ENCODE measurements at regions of chr13 and their contacts with region 1.

Region 1: DNA sequence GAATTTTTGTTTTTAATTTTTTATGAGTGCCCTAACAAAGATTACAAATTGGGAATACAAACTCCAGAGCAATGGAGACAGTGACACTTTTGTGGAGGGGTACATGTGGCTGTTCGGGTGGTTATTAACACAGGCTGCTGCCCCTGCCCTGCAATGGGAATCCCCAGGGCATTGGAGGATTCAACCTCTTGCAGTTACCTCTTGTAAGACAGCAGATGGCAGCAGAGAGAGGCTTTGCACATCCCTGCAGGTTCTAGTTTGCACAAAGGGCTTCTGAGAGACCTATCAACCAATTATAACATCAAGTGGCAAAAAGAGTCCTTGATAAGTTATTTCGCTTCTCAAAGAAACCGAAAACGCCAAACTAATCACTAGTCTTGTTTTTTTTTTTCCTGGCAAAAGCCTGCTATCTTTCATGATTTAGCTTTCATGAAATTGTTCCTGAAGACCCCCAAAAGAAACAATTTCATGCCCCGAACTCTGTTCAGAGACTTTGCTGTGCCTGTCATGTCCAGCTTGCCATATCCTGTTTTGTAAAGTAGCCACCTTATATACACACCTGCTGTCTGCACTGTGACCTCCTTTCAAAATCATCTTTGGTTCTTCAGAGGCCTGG is 10.4 kb downstream of the GJB2 start:
- DNase-seq: peak; percentile 78
- H3K4me3 Mint-ChIP-seq: no peak overlapping the region
- H3K27ac Mint-ChIP-seq: no peak overlapping the region
- H3K4me1 Mint-ChIP-seq: peaks cover 7% of the 10 kb centered on the region
- H3K27me3 Mint-ChIP-seq: no peaks in the 10 kb centered on the region
- CTCF ChIP-seq: peak; percentile 79

Region 2: DNA sequence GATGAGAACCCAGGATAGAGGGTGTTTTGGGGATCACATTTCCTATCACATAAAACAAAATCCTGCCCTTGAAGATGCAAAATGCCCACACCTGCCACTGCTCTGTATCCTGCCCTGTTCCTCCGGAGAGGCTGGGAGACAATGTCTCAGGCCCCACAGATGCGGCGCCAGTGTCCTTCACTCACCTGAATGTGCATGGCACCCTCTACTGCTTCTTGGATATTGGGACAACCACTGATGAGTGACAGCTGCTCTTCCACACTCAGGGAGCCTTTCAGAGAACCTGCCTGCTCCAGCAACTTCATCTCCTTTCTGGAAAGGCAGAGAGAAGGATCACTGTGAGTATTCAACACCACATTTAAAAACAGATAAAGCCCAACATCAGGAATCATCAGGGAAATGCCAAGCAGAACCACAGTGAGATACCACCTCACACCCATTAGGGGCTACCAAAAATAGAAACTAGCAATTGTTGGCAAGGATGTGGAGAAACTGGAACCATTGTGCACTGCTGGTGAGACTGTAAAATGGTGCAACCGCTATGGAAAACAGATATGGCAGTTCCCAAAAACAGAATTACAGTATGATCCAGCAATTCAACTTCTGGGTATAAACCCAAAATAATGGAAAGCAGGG is 307.0 kb after region 1 on chr13:
- CTCF ChIA-PET with region 1: interaction called, 5 read pairs
- POLR2A ChIA-PET with region 1: no interaction called
- intact Hi-C with region 1: loop called (anchors 1 kb)
- DNase-seq: no peak
- H3K4me3 Mint-ChIP-seq: no peak overlapping the region
- H3K27ac Mint-ChIP-seq: no peak overlapping the region
- H3K4me1 Mint-ChIP-seq: peaks cover 13% of the 10 kb centered on the region
- H3K27me3 Mint-ChIP-seq: no peaks in the 10 kb centered on the region
- CTCF ChIP-seq: peak; percentile 28

Region 3: GRCh38 chr13:20713751-20714150 is 531.4 kb after region 1 on chr13:
- CTCF ChIA-PET with region 1: no interaction called
- POLR2A ChIA-PET with region 1: no interaction called
- intact Hi-C with region 1: loop called (anchors 5 kb)
- DNase-seq: no peak
- H3K4me3 Mint-ChIP-seq: no peak overlapping the region
- H3K27ac Mint-ChIP-seq: no peak overlapping the region
- H3K4me1 Mint-ChIP-seq: peaks cover 19% of the 10 kb centered on the region
- H3K27me3 Mint-ChIP-seq: no peaks in the 10 kb centered on the region
- CTCF ChIP-seq: no peak

Region 4: GRCh38 chr13:20773194-20774080 is 591.1 kb after region 1 on chr13 and contains the start of gene EEF1AKMT1:
- CTCF ChIA-PET with region 1: no interaction called
- POLR2A ChIA-PET with region 1: no interaction called
- intact Hi-C with region 1: loop called (anchors 5 kb)
- DNase-seq: peak; percentile 93
- H3K4me3 Mint-ChIP-seq: peak within 1 kb of the TSS; percentile 83
- H3K27ac Mint-ChIP-seq: peak within 1 kb of the TSS; percentile 93
- H3K4me1 Mint-ChIP-seq: peaks cover 6% of the 10 kb centered on the region
- H3K27me3 Mint-ChIP-seq: no peaks in the 10 kb centered on the region
- CTCF ChIP-seq: no peak
- total RNA-seq, gene EEF1AKMT1: 11.3 and 16.5 TPM in 2 replicates